WTC11 (cell line): ENCODE measurements at regions of chr11 and their contacts with region 1.

Region 1: DNA sequence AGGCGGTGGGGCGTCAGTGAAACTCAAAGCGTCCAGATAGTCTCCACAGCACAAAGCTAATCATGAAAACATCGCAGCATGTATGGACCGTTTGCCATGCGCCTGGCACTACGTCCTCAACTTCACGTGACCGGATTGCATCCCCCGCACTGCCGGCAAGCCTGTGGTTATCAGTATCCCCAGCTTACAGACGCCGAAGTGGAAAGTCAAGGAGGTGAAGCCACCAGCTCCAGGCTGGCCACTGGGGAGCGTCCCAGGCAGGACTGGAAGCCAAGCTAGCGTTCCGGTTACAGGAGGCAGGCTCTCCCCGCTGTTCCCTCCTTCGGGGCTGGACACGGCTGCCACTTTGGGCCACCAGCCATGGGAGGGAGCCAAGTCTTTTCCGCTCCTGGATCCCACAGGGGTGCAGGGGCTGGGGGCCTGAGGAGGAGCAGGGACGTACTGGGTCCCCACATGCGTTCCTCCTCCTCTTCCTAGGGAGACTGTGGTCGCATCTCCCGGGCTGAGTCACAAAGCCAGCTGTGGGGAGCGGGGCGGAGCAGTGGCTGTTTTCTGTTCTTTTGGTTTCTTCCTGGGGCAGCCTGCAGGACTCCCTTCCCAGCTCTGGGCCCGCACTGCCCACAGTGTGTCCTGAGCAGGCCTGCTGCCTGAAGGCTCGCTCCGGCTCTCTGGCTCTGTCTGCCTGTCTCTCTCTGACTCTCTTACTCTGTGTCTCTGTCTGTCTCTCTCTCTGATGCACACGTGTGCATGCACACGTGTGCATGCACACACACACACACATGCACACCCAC is 4.3 kb upstream of the OSBPL5 start:
- DNase-seq: peak; percentile 52
- ATAC-seq: peak; percentile 66
- H3K4me3 Mint-ChIP-seq: 0 out of 2 replicates have a peak overlapping the region, but pooled peaks have one; percentile 8
- H3K27ac Mint-ChIP-seq: no peak overlapping the region
- H3K4me1 Mint-ChIP-seq: peaks cover 7% of the 10 kb centered on the region
- H3K27me3 Mint-ChIP-seq: peaks cover 26% of the 10 kb centered on the region
- CTCF ChIP-seq: no peak

Region 2: DNA sequence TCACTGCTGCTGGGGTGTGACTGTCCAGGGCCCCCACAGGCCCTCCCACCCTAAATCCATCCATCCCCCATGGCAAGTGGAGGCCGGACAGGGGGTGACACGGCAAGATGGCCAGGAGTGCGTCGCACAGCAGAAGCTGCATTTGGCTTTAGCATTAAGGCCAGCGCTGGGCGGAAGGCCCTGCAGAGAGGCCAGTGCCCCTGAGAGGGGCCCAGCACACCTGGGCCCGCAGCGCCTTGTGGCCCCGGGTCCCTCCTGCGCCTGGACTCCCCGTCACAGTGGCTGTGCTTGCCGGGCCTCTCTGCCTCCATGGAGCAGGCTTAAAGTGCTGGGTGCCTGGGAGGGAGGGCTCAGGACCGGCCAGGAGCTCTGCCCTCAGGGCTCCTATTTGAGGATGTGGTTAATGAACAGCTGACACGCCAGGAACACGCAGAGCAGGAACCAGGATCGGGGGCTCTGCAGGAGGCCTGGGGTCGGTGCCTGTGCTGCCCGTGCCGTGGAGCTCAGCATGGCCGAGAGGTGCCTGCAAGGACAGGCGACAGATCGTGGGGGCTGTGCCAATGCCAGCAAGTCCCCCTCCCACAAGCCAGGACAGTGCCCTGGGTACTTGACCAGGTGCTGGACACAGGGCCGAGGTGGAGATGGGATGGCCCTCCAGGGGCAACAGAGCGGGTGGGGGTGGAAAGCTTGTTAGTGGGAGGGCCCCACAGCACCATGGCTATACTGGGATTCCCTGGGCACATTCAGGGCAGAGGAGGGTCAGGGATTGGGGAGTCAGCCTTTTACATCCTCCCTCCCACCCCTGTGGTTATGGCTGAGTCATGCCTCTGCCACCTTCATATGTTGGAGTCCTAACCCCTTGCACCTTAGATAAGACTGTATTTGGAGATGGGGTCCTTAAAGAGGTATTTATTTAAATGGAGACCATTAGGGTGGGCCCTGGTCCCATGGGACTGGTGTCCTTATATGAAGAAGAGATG is 81.3 kb before region 1 on chr11:
- CTCF ChIA-PET with region 1: no interaction called
- POLR2A ChIA-PET with region 1: no interaction called
- DNase-seq: no peak
- ATAC-seq: no peak
- H3K4me3 Mint-ChIP-seq: no peak overlapping the region
- H3K27ac Mint-ChIP-seq: no peak overlapping the region
- H3K4me1 Mint-ChIP-seq: peaks cover 7% of the 10 kb centered on the region
- H3K27me3 Mint-ChIP-seq: peaks cover 3% of the 10 kb centered on the region; the same call in 1 of the 2 replicates
- CTCF ChIP-seq: no peak

Region 3: GRCh38 chr11:3195251-3196160 is 26.1 kb after region 1 on chr11:
- CTCF ChIA-PET with region 1: interaction called, 12 read pairs
- POLR2A ChIA-PET with region 1: no interaction called
- DNase-seq: no peak
- ATAC-seq: no peak; the same call in 1 of the 2 replicates
- H3K4me3 Mint-ChIP-seq: no peak overlapping the region
- H3K27ac Mint-ChIP-seq: no peak overlapping the region
- H3K4me1 Mint-ChIP-seq: peaks cover 13% of the 10 kb centered on the region
- H3K27me3 Mint-ChIP-seq: peaks cover 2% of the 10 kb centered on the region; the same call in 1 of the 2 replicates
- CTCF ChIP-seq: no peak

Region 4: GRCh38 chr11:3203221-3204043 is 34.0 kb after region 1 on chr11:
- CTCF ChIA-PET with region 1: interaction called, 10 read pairs
- POLR2A ChIA-PET with region 1: no interaction called
- DNase-seq: peak; percentile 57
- ATAC-seq: peak; percentile 78
- H3K4me3 Mint-ChIP-seq: peak overlapping the region; percentile 54
- H3K27ac Mint-ChIP-seq: no peak overlapping the region
- H3K4me1 Mint-ChIP-seq: peaks cover 10% of the 10 kb centered on the region
- H3K27me3 Mint-ChIP-seq: peaks cover 42% of the 10 kb centered on the region
- CTCF ChIP-seq: no peak

Region 5: DNA sequence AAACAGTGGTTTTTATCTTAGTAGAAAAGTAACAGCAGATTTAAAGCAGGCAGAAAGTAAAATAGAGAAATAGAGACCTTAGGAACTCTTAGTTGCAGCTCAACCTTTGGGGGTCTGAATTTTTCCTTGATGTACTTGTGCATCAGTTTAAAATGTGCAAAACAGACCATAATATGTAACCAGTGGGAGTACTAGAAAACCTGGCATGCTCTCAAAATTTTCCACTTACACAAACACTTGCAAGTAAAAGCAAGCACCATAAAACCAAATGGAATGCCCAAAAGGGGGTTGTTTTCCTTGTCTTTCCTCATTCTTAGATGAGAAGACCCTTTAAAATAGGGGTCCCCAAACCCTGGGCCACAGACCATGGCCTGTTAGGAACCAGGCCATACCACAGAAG is 75.6 kb after region 1 on chr11:
- CTCF ChIA-PET with region 1: no interaction called
- POLR2A ChIA-PET with region 1: no interaction called
- DNase-seq: no peak
- ATAC-seq: no peak
- H3K4me3 Mint-ChIP-seq: no peak overlapping the region
- H3K27ac Mint-ChIP-seq: no peak overlapping the region
- H3K4me1 Mint-ChIP-seq: peaks cover 17% of the 10 kb centered on the region
- H3K27me3 Mint-ChIP-seq: peaks cover 5% of the 10 kb centered on the region
- CTCF ChIP-seq: no peak

Region 6: DNA sequence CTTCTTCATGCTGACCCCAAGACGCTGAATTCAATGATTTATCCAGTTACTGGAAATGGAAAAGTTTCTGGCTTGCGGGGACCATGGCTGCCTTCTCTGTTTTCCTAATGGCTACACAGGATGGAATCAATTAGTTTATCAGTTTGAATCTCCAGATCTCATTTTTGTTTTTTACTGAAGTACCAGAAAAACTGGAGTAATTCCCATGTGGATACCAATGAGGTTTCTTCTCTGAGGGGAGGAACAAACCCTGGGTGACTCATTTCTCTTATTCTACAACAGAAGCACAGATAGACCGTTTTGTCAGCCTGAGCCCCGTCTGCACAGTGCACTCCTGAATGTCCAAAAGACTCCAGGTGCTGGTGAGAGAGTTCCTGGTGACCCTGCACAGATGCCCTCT is 206.1 kb after region 1 on chr11:
- CTCF ChIA-PET with region 1: no interaction called
- POLR2A ChIA-PET with region 1: no interaction called
- DNase-seq: no peak
- ATAC-seq: no peak
- H3K4me3 Mint-ChIP-seq: peak overlapping the region; percentile 96
- H3K27ac Mint-ChIP-seq: peak overlapping the region; percentile 95
- H3K4me1 Mint-ChIP-seq: peaks cover 62% of the 10 kb centered on the region
- H3K27me3 Mint-ChIP-seq: no peaks in the 10 kb centered on the region
- CTCF ChIP-seq: no peak